Activated T-helper 2 cell treated with anti-CD3 and anti-CD28 coated beads, Interferon-gamma antibody, Interleukin-2, Interleukin-4, amounts not matched to agents 10 μg/mL and 5 μg/mL and 100 μg/mL, durations not matched to agents 14 hours and 24 hours and 36 hours (primary cell): ENCODE measurements at regions of chr7 and their contacts with region 1.

Region 1: DNA sequence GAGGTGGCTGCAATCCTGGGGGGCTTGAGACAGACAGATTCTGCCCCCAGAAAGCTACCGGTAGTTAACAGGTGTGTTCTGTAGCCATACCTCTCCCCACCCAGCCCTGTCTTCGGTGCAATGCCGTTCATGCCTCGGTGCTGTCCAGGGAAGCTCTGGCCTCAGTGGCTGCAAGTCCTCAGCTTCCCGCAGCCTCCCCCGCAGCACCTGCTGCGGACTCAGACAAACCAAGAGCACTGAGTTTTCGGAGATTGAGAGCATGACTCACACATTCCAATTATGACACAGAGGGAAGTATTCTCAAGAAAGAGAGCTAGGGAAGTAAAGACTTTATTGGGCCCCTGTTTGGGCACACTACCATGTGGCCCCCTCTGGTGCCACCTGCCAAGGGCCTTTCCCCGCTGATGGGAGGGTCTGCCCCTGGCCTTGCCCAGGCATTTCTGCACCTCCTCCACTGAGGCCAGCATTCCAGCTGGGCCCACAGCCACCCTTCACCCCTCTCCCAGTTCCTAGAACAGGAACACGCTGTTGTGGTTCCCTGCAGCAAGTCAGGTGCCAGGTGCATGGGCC is 30.2 kb upstream of the EZH2 start:
- DNase-seq: peak; percentile 41
- H3K4me3 Mint-ChIP-seq: peak overlapping the region; percentile 71
- H3K27ac Mint-ChIP-seq: peak overlapping the region; percentile 92
- H3K4me1 Mint-ChIP-seq: peaks cover 66% of the 10 kb centered on the region
- H3K27me3 Mint-ChIP-seq: no peaks in the 10 kb centered on the region

Region 2: DNA sequence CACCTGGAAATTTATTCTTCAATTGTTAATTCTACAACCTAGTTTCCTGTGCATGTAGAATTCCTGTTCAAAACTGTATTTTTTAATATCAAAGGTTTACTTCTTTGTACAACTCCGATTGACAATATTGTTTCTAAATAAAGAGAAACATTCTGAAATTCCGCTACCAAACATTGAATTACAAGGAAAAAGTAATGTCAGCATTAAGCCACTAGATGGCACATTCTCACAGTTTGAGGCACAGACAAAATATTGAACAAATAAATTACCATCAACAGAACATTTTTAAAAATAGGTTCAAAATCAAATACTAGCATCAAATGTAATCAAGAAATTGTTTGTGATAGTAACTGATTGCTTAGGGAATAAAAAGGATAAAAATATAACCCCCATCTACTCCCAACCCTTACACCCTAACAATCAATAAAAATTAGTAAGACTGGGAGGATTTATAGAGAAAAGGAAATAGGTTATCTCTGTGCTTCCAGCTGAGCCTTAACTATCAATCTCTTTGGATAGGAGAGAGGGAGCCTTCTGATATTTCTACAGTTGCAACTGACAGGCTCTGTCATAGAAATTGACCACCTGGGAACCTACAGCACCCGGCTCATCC is 410.3 kb before region 1 on chr7:
- intact Hi-C with region 1: loop called (anchors 1 kb)
- DNase-seq: no peak
- H3K4me3 Mint-ChIP-seq: no peak overlapping the region
- H3K27ac Mint-ChIP-seq: no peak overlapping the region
- H3K4me1 Mint-ChIP-seq: peaks cover 23% of the 10 kb centered on the region
- H3K27me3 Mint-ChIP-seq: peaks cover 32% of the 10 kb centered on the region

Region 3: GRCh38 chr7:148584154-148584827 is 330.0 kb before region 1 on chr7:
- intact Hi-C with region 1: loop called (anchors 1 kb)
- DNase-seq: no peak
- H3K4me3 Mint-ChIP-seq: peak overlapping the region; percentile 38
- H3K27ac Mint-ChIP-seq: no peak overlapping the region
- H3K4me1 Mint-ChIP-seq: peaks cover 33% of the 10 kb centered on the region
- H3K27me3 Mint-ChIP-seq: peaks cover 16% of the 10 kb centered on the region

Region 4: DNA sequence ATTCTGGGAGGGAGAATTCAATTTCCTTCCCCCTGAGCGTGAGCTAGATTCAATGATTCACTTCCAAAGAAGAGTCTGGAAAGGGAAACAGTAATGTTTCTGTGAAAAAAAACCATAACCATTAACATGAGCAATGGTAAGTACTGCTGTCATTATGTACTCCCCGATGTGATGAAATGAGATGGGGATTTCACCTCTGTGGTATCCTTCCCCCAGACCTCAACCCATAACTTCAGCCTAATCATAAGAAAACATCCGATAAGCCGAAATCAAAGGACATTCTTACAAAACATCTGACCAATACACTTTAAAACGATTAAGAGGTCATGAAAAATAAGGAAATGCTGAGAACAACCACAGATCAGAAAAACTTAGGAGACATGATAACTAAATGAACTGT is 57.4 kb before region 1 on chr7:
- intact Hi-C with region 1: loop called (anchors 1 kb)
- DNase-seq: no peak
- H3K4me3 Mint-ChIP-seq: no peak overlapping the region
- H3K27ac Mint-ChIP-seq: peak overlapping the region; percentile 79
- H3K4me1 Mint-ChIP-seq: peaks cover 47% of the 10 kb centered on the region
- H3K27me3 Mint-ChIP-seq: no peaks in the 10 kb centered on the region

Region 5: GRCh38 chr7:148884299-148885022 is 29.8 kb before region 1 on chr7:
- intact Hi-C with region 1: loop called (anchors 1 kb)
- DNase-seq: peak; percentile 92
- H3K4me3 Mint-ChIP-seq: peak overlapping the region; percentile 94
- H3K27ac Mint-ChIP-seq: peak overlapping the region; percentile 98
- H3K4me1 Mint-ChIP-seq: peaks cover 29% of the 10 kb centered on the region
- H3K27me3 Mint-ChIP-seq: no peaks in the 10 kb centered on the region

Region 6: GRCh38 chr7:148927123-148928045 is 13.1 kb after region 1 on chr7:
- intact Hi-C with region 1: loop called (anchors 1 kb)
- DNase-seq: no peak
- H3K4me3 Mint-ChIP-seq: no peak overlapping the region
- H3K27ac Mint-ChIP-seq: peak overlapping the region; percentile 80
- H3K4me1 Mint-ChIP-seq: peaks cover 30% of the 10 kb centered on the region
- H3K27me3 Mint-ChIP-seq: no peaks in the 10 kb centered on the region

Region 7: DNA sequence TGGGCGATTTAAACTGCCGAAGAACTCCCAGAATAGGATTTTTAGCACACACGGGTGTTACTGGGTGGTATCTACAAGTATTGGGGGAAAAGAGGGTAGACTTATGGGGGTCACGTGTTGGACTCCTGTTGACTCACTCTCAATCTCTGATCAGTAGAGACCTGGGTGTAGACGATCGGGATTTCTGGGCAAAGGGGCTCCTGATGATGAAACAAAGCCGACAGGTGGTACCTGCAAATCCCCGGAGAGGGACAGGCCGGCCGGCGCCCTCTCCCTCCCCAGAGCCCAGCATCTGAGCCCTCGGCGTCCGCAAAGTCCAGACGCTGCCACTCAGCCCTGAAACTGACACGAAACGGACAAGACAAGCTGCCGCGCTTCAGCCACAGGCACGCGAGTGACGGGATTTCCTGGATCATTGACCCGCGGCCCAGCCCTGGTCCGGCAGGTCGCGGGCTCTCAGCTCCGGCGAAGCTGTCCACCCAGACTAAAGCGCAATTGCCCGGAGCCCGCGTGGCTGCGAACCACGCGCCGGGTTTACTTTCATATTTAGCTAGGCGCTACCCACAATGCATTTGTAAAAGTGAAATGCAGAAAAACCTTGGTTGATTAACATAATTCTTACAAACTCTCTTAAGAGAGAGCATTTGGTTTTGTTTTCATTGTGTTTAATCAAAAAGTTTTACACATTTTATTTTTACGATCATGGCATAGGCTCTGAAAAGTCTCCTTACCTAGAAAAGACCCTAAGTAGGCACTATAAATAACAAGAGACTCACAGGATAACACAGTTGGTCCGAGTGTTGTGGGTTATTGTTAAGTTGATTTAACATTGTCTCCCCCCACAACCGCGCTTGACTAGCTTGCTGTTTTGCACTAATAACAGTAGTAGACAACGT is 26.7 kb after region 1 on chr7:
- intact Hi-C with region 1: loop called (anchors 1 kb)
- DNase-seq: peak; percentile 66
- H3K4me3 Mint-ChIP-seq: peak overlapping the region; percentile 94
- H3K27ac Mint-ChIP-seq: peak overlapping the region; percentile 99
- H3K4me1 Mint-ChIP-seq: peaks cover 20% of the 10 kb centered on the region
- H3K27me3 Mint-ChIP-seq: no peaks in the 10 kb centered on the region